CD8-positive, alpha-beta memory T cell (primary cell): ENCODE measurements at regions of chr9 and their contacts with region 1.

Region 1: DNA sequence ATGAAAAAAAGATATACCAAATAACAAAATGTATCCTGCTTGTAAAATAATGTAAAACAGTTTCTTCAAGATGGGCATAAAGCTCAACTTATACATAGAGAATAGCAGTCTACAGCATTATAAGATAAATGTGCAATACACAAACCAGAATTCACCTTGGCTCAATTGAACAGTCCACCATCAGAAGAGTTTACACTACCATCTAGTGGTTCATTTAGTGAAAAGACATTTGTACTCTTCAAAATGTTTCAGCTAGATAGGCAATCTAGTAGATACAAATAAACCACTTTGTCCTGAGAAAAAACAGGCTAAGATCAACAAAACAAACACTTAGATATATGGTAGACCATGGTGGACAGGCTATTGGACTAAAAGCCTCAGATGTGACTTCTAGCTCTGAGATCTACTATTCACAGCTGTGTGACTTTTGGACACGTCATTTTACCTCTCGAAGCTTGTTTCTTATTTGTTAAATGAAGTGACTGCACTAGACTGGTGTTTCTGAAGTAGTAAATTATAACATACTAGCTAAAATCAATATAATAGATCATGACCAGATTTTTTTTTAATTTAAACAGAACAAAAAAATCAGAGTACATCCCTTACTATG is 22.1 kb upstream of the TPD52L3 start:
- DNase-seq: peak in 1 of 5 donors; percentile 5
- H3K4me3 ChIP-seq: no peak overlapping the region
- H3K4me3 Mint-ChIP-seq: no peak overlapping the region
- H3K27ac ChIP-seq: no peak overlapping the region
- H3K27ac Mint-ChIP-seq: no peak overlapping the region
- H3K4me1 ChIP-seq: no peaks in the 10 kb centered on the region
- H3K4me1 Mint-ChIP-seq: no peaks in the 10 kb centered on the region
- H3K27me3 ChIP-seq: peaks cover 3% of the 10 kb centered on the region
- H3K27me3 Mint-ChIP-seq: peaks cover 9 to 19% of the 10 kb centered on the region in 2 donors

Region 2: DNA sequence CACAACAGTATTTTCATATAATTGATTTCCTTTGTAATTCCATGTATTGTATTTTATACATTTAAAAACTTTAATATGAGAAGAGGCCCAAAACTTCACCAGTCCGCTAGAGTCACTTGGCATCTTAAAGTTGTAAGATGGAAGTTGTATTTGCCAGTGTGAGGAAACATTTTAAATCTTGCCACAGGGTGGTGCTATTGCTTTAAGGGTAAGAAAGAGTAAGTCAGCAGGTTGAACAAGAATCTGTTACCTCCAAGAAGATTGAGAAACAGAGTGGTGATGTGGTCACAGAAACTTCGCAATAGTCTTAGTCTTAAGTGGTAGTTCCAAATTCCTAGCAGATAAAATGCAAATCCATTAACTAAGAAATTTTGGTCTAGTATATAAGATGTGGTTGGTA is 250.8 kb before region 1 on chr9:
- CTCF ChIA-PET with region 1: interaction called, 23 read pairs
- POLR2A ChIA-PET with region 1: no interaction called
- DNase-seq: peak in 2 of 5 donors; percentile 46 to 50
- H3K4me3 ChIP-seq: no peak overlapping the region
- H3K4me3 Mint-ChIP-seq: no peak overlapping the region
- H3K27ac ChIP-seq: no peak overlapping the region
- H3K27ac Mint-ChIP-seq: peak overlapping the region in 1 of 8 donors; percentile 33
- H3K4me1 ChIP-seq: peaks cover 4% of the 10 kb centered on the region
- H3K4me1 Mint-ChIP-seq: peaks cover 0 to 4% (median under 1%) of the 10 kb centered on the region in 3 donors
- H3K27me3 ChIP-seq: no peaks in the 10 kb centered on the region
- H3K27me3 Mint-ChIP-seq: peaks cover 8 to 9% of the 10 kb centered on the region in 2 donors